PC-9 (cell line): ENCODE measurements at regions of chr2 and their contacts with region 1.

Region 1: DNA sequence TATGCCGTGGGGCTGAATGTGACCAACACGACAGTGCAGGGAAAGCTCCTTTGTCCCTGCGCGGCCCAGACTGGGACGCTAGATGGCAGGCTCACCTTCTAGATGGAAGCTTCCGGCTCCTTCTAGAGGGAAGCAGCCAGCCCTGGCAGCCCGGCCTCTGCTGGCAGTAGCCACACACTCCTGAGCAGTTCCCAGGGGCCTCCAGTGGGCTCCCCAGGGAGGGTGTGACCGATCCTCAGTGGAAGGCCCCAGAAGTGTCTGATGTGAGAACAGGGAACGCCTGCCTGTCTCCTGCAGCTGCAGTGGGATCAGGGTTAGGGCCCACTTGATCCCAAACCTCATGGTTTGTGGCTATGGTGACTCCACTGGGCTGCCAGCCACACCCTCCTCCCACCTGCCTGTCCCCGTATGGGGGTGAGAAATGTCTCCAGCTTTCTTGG is 48.5 kb upstream of the LRPPRC start:
- DNase-seq: peak; percentile 79 to 86
- H3K4me3 ChIP-seq: no peak overlapping the region
- H3K27ac ChIP-seq: no peak overlapping the region
- H3K4me1 ChIP-seq: no peaks in the 10 kb centered on the region
- H3K27me3 ChIP-seq: no peaks in the 10 kb centered on the region
- CTCF ChIP-seq: peak; percentile 90

Region 2: GRCh38 chr2:44016282-44016681 is 28.0 kb before region 1 on chr2:
- CTCF ChIA-PET with region 1: no interaction called
- POLR2A ChIA-PET with region 1: no interaction called
- intact Hi-C with region 1: no loop called
- DNase-seq: peak in 1 of 2 experiments; percentile 49
- H3K4me3 ChIP-seq: no peak overlapping the region
- H3K27ac ChIP-seq: no peak overlapping the region
- H3K4me1 ChIP-seq: no peaks in the 10 kb centered on the region
- H3K27me3 ChIP-seq: peaks cover 78% of the 10 kb centered on the region
- CTCF ChIP-seq: no peak

Region 3: GRCh38 chr2:44061876-44062275 is 17.6 kb after region 1 on chr2:
- CTCF ChIA-PET with region 1: no interaction called
- POLR2A ChIA-PET with region 1: no interaction called
- intact Hi-C with region 1: no loop called
- DNase-seq: no peak
- H3K4me3 ChIP-seq: no peak overlapping the region
- H3K27ac ChIP-seq: no peak overlapping the region
- H3K4me1 ChIP-seq: no peaks in the 10 kb centered on the region
- H3K27me3 ChIP-seq: peaks cover 12% of the 10 kb centered on the region; the same call in 1 of the 2 replicates
- CTCF ChIP-seq: no peak

Region 4: DNA sequence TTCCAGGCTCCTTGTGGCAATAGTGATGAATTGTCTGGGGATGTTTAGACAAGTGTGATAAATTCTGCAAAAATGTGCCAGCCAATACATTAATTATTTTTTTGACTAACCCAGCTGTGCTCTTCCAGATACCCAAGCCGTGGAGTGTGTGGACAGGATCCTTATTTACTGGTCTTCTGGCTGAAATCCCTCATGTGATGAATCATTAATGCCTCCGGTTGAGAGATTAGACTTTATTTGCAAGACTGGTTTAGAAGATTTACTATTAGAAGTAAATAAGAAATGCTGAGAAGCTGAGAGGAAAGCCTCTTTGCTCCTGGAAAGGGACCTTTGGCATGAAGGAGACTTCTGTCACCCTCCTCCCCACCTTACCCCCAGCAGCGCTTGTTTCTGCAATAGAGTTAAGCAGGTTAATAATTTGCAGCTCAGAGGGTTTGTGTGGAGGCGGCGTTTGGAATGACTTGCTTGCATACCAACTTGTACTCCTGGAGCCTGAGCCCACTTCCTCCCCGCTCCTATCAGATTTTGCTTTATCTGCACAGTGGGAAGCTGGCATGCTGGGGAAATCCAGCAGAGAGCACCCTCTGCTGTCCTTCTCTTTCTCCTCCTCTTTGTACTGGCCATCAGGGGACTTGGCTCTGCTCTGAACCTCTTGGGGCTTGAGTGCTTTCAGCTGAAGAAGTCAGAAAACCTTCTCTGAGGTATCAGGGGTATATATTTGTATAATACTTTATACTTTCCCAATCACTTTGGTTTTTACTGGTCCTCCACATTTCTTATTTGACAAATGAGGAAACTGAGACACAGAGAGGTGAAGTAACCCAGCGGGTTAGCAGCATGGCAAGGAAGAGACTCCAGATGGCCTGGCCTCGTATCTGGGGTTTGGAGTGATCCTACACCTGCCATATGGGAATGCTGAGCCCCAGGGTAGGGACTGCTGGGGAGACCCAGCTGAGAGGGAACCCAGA is 247.3 kb after region 1 on chr2:
- CTCF ChIA-PET with region 1: interaction called, 3 read pairs
- POLR2A ChIA-PET with region 1: no interaction called
- intact Hi-C with region 1: loop called (anchors 1 kb)
- DNase-seq: peak; percentile 71 to 97
- H3K4me3 ChIP-seq: peak overlapping the region; percentile 5; the same call in 1 of the 2 replicates
- H3K27ac ChIP-seq: peak overlapping the region; percentile 49
- H3K4me1 ChIP-seq: peaks cover 30% of the 10 kb centered on the region
- H3K27me3 ChIP-seq: no peaks in the 10 kb centered on the region
- CTCF ChIP-seq: peak; percentile 76

Region 5: GRCh38 chr2:44392338-44392943 is 348.1 kb after region 1 on chr2:
- CTCF ChIA-PET with region 1: interaction called, 19 read pairs
- POLR2A ChIA-PET with region 1: no interaction called
- intact Hi-C with region 1: loop called (anchors 5 kb)
- DNase-seq: peak in 1 of 2 experiments; percentile 46
- H3K4me3 ChIP-seq: no peak overlapping the region
- H3K27ac ChIP-seq: no peak overlapping the region
- H3K4me1 ChIP-seq: no peaks in the 10 kb centered on the region
- H3K27me3 ChIP-seq: no peaks in the 10 kb centered on the region
- CTCF ChIP-seq: peak; percentile 94

Region 6: GRCh38 chr2:44715671-44716081 is 671.4 kb after region 1 on chr2:
- CTCF ChIA-PET with region 1: no interaction called
- POLR2A ChIA-PET with region 1: no interaction called
- intact Hi-C with region 1: loop called (anchors 10 kb)
- DNase-seq: peak; percentile 29 to 68
- H3K4me3 ChIP-seq: no peak overlapping the region
- H3K27ac ChIP-seq: no peak overlapping the region
- H3K4me1 ChIP-seq: no peaks in the 10 kb centered on the region
- H3K27me3 ChIP-seq: no peaks in the 10 kb centered on the region
- CTCF ChIP-seq: peak; percentile 73